ENCODE measurements at regions of chr9 and their contacts with region 1.

Region 1: GRCh38 chr9:123349691-123350480 is 6.1 kb upstream of the CRB2 start:
- DNase-seq: peak; percentile 48
- ATAC-seq: peak; percentile 82
- H3K4me3 ChIP-seq: no peak overlapping the region
- H3K27ac ChIP-seq: no peak overlapping the region
- H3K4me1 ChIP-seq: peaks cover 0 to 16% of the 10 kb centered on the region in 2 experiments; a peak in 2 of 4 replicates
- H3K27me3 ChIP-seq: no peaks in the 10 kb centered on the region
- CTCF ChIP-seq: peak; percentile 78 to 98 (median 97); a peak in 5 of 6 replicates
- POLR2A ChIP-seq: no peak
- RAD21 ChIP-seq: peak; percentile 99

Region 2: DNA sequence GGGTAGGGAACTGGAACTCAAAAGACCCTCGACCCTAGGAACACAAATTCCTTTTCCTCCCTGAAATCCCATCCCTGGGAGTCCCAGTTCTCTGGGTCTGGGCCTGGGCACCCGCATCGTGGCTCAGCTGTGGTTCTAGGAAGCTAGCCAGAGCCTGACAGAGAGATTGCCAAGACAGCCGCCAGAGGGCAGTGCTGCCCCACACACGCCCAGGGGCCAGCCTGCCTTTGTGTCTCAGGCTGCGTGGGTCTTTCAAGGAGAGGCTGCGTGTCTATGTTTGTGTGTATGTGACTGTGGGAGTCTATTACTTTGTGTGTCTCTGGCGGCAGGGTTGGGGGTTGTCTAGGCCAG is 1224.8 kb before region 1 on chr9:
- CTCF ChIA-PET with region 1: interaction called, 3 read pairs
- POLR2A ChIA-PET with region 1: no interaction called
- RAD21 ChIA-PET with region 1: no interaction called
- intact Hi-C with region 1: loop called (anchors 10 kb)
- DNase-seq: peak; percentile 56
- ATAC-seq: peak; percentile 88
- H3K4me3 ChIP-seq: no peak overlapping the region
- H3K27ac ChIP-seq: no peak overlapping the region
- H3K4me1 ChIP-seq: peaks cover 0 to 12% of the 10 kb centered on the region in 2 experiments; a peak in 1 of 4 replicates
- H3K27me3 ChIP-seq: no peaks in the 10 kb centered on the region
- CTCF ChIP-seq: peak; percentile 92 to 97 (median 97)
- POLR2A ChIP-seq: no peak
- RAD21 ChIP-seq: peak; percentile 100

Region 3: GRCh38 chr9:122464633-122465567 is 885.0 kb before region 1 on chr9:
- CTCF ChIA-PET with region 1: interaction called, 19 read pairs
- POLR2A ChIA-PET with region 1: no interaction called
- RAD21 ChIA-PET with region 1: no interaction called
- intact Hi-C with region 1: loop called (anchors 5 kb)
- DNase-seq: peak; percentile 68
- ATAC-seq: peak; percentile 89
- H3K4me3 ChIP-seq: peak overlapping the region; percentile 35 to 50
- H3K27ac ChIP-seq: no peak overlapping the region
- H3K4me1 ChIP-seq: peaks cover 0 to 12% of the 10 kb centered on the region in 2 experiments; a peak in 2 of 4 replicates
- H3K27me3 ChIP-seq: peaks cover 17% of the 10 kb centered on the region
- CTCF ChIP-seq: peak; percentile 79 to 88 (median 86)
- POLR2A ChIP-seq: no peak
- RAD21 ChIP-seq: peak; percentile 93

Region 4: GRCh38 chr9:122827761-122828093 is 522.2 kb before region 1 on chr9:
- CTCF ChIA-PET with region 1: interaction called, 5 read pairs
- POLR2A ChIA-PET with region 1: no interaction called
- RAD21 ChIA-PET with region 1: interaction called in 1 of 2 experiments, 5 read pairs
- intact Hi-C with region 1: loop called (anchors 5 kb)
- DNase-seq: no peak
- ATAC-seq: peak; percentile 18
- H3K4me3 ChIP-seq: peak overlapping the region; percentile 82 to 84
- H3K27ac ChIP-seq: peak overlapping the region; percentile 81
- H3K4me1 ChIP-seq: peaks cover 7 to 15% of the 10 kb centered on the region in 2 experiments; a peak in 3 of 4 replicates
- H3K27me3 ChIP-seq: no peaks in the 10 kb centered on the region
- CTCF ChIP-seq: no peak
- POLR2A ChIP-seq: no peak
- RAD21 ChIP-seq: no peak

Region 5: DNA sequence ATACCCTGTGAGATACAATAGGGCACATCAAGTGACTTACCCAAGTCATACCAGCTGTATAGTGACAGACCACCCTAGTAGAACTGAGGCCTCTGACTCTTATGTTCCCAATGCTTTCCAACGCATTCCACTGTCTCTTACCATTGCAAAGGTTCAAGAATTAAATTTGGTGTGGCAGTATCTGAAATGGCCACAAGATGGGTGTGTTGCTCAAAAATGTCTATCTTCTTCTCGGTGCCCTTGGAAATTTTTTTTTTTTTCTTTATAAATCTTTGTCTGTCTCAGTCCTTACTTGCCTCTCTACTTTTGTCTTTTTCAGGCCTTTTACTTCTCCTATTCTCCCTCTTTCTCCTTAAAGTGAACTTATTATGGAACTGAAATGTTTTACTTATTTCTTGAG is 268.1 kb before region 1 on chr9:
- CTCF ChIA-PET with region 1: interaction called, 37 read pairs
- POLR2A ChIA-PET with region 1: no interaction called
- RAD21 ChIA-PET with region 1: interaction called in 1 of 2 experiments, 4 read pairs
- intact Hi-C with region 1: loop called (anchors 1 kb)
- DNase-seq: peak; percentile 22
- ATAC-seq: peak; percentile 73
- H3K4me3 ChIP-seq: no peak overlapping the region
- H3K27ac ChIP-seq: no peak overlapping the region
- H3K4me1 ChIP-seq: no peaks in the 10 kb centered on the region
- H3K27me3 ChIP-seq: no peaks in the 10 kb centered on the region
- CTCF ChIP-seq: peak; percentile 51 to 62 (median 57); a peak in 5 of 6 replicates
- POLR2A ChIP-seq: no peak
- RAD21 ChIP-seq: peak; percentile 66

Region 6: GRCh38 chr9:123389070-123389469 is 39.2 kb after region 1 on chr9:
- CTCF ChIA-PET with region 1: interaction called, 47 read pairs
- POLR2A ChIA-PET with region 1: no interaction called
- RAD21 ChIA-PET with region 1: interaction called in 1 of 2 experiments, 3 read pairs
- intact Hi-C with region 1: loop called (anchors 1 kb)
- DNase-seq: no peak
- ATAC-seq: no peak
- H3K4me3 ChIP-seq: no peak overlapping the region
- H3K27ac ChIP-seq: no peak overlapping the region
- H3K4me1 ChIP-seq: no peaks in the 10 kb centered on the region
- H3K27me3 ChIP-seq: no peaks in the 10 kb centered on the region
- CTCF ChIP-seq: no peak
- POLR2A ChIP-seq: no peak
- RAD21 ChIP-seq: no peak